PC-3 (cell line): ENCODE measurements at regions of chr20 and their contacts with region 1.

Region 1: GRCh38 chr20:31723319-31724078 is 831 bp upstream of the BCL2L1 start:
- DNase-seq: peak; percentile 97
- ATAC-seq: peak; percentile 64
- H3K4me3 ChIP-seq: peak overlapping the region; percentile 95
- H3K27ac ChIP-seq: peak overlapping the region; percentile 93
- H3K4me1 ChIP-seq: peaks cover 25% of the 10 kb centered on the region
- H3K27me3 ChIP-seq: no peaks in the 10 kb centered on the region
- CTCF ChIP-seq: peak; percentile 93

Region 2: DNA sequence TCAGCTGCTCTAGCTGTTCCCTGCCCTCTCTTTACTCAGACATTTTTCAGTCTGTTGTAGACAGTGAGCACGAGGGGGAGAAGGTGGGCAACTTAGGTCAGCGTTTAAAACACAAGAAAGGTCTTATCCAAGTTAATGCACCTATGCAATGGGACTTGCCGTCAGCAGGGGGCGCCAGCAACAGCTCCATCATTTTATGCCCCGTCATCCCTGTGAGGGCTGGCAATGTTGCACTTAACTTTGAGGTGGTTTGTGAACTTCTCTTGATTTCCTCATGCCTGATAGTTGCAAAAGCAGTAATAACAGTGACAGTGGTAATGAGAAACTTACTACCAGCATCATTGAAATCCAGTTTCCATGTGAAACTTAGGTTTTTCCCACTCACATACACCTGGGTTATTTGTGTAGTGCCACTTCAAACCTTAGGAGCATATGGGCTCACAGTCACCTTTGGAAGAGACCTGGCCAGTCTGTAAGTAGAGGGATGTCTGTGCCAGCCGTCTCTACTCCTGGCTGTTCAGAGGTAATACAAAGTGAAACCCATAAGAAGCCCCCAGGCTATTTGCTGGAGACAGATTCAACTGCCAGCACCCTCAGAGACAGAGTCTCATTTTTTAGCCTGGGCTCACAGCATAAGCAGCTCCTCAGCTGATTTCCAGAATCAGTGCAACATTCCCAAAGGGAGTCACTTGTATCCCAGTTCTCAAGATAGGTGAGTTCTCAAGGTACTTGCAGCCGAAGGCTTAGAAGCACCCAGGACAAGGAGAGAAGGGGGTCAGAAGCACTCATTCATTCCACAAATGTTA is 163.2 kb before region 1 on chr20:
- CTCF ChIA-PET with region 1: interaction called, 4 read pairs
- POLR2A ChIA-PET with region 1: interaction called, 5 read pairs
- intact Hi-C with region 1: loop called (anchors 5 kb)
- DNase-seq: peak; percentile 69
- ATAC-seq: peak; percentile 39
- H3K4me3 ChIP-seq: peak overlapping the region; percentile 24
- H3K27ac ChIP-seq: peak overlapping the region; percentile 95
- H3K4me1 ChIP-seq: peaks cover 40% of the 10 kb centered on the region
- H3K27me3 ChIP-seq: no peaks in the 10 kb centered on the region
- CTCF ChIP-seq: peak; percentile 97

Region 3: DNA sequence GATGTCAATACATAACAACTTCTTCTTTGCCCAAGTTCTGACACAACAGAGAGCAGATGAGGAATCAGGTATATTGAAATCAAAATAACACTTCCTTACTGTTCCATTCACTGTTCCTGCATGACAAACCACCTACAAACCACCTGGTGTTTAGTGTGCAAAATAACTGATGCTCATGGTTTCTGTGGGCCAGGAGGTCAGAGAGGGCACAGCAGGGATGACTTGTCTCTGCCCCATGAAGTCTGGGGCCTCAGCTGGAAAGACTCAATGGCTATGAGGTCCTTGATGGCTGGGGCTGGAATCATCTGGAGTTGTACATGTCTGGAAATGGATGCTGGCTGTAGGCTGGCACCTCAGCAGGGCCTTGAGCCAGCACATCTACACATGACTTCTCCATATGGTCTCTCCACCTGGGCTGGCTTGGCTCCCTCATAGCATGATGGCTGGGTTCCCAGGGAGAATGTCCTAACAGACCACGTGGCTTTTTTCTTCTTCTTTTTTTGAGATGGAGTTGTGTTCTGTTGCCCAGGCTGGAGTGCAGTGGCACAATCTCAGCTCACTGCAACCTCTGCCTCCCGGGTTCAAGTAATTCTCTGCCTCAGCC is 93.2 kb before region 1 on chr20:
- CTCF ChIA-PET with region 1: interaction called, 40 read pairs
- POLR2A ChIA-PET with region 1: interaction called, 3 read pairs
- intact Hi-C with region 1: loop called (anchors 1 kb)
- DNase-seq: no peak
- ATAC-seq: no peak
- H3K4me3 ChIP-seq: no peak overlapping the region
- H3K27ac ChIP-seq: no peak overlapping the region
- H3K4me1 ChIP-seq: no peaks in the 10 kb centered on the region
- H3K27me3 ChIP-seq: no peaks in the 10 kb centered on the region
- CTCF ChIP-seq: no peak

Region 4: DNA sequence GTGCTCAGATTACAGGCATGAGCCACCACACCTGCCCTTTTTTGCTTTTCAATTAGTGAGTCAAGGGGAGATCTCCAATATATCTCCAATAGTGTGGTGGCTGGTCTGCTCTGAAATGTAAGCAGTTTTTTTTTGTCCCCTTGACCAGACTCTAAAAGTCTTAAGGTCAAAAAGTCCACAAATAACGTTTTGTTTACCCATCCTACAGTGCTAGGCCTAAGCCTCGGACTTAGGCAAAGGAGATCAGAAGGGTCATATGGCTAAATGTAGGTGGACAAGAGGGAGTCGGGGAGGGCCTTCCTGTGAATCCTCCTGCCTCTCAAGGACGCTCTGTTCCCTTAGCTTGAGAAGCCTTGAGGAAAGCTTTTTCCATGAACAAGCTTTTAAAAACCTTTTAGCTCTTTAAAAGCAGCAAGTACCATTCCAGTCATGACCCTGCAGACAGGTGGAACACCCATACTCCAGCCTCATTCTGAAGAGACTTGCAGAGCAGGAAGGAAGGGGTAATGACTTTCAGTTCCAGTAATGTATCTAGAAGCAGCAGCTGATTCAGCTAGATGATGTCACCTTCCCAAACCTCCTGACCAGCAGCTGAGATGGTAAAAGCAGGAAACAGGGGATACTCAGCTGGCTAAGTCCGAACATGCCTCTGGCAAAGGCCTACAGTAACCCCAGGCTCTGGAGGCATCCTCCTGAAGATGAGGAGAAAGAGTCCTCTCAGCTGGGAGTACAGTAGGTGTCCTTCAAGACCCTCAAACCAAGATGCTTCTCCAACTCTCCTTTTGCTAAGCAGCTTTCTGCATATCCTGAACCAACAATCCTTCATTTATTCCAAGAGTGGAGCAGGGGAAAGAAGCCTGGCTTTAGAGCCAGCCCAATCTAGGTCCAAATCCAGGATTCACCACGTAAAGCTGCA is 24.4 kb before region 1 on chr20:
- CTCF ChIA-PET with region 1: interaction called, 16 read pairs
- POLR2A ChIA-PET with region 1: interaction called, 33 read pairs
- intact Hi-C with region 1: loop called (anchors 1 kb)
- DNase-seq: peak; percentile 88
- ATAC-seq: peak; percentile 47
- H3K4me3 ChIP-seq: no peak overlapping the region
- H3K27ac ChIP-seq: peak overlapping the region; percentile 62
- H3K4me1 ChIP-seq: peaks cover 75% of the 10 kb centered on the region
- H3K27me3 ChIP-seq: no peaks in the 10 kb centered on the region
- CTCF ChIP-seq: no peak

Region 5: GRCh38 chr20:31712564-31713311 is 10.8 kb before region 1 on chr20:
- CTCF ChIA-PET with region 1: interaction called, 16 read pairs
- POLR2A ChIA-PET with region 1: interaction called, 20 read pairs
- intact Hi-C with region 1: loop called (anchors 1 kb)
- DNase-seq: peak; percentile 97
- ATAC-seq: peak; percentile 44
- H3K4me3 ChIP-seq: peak overlapping the region; percentile 59
- H3K27ac ChIP-seq: peak overlapping the region; percentile 99
- H3K4me1 ChIP-seq: peaks cover 92% of the 10 kb centered on the region
- H3K27me3 ChIP-seq: no peaks in the 10 kb centered on the region
- CTCF ChIP-seq: no peak

Region 6: DNA sequence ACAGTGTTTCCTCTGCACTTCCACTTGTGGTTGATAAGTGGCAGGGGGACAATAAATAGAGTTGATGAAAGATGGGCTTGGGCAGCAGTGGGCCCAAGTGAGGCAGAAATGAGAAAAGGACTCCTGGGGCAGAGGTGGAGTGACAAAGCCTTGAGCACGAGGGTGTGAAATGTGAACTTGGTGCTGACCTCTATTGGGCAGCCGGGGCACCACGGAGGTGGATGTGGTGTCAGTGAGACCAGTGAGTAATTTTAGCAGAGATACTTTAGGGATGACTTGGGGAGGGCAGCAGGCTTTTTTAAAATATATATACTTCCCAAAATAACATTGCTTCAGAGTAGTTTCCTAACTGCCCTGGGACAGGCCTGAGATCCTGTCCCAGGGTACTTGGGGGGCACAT is 65.1 kb after region 1 on chr20:
- CTCF ChIA-PET with region 1: no interaction called
- POLR2A ChIA-PET with region 1: no interaction called
- intact Hi-C with region 1: loop called (anchors 5 kb)
- DNase-seq: no peak
- ATAC-seq: peak; percentile 66
- H3K4me3 ChIP-seq: no peak overlapping the region
- H3K27ac ChIP-seq: no peak overlapping the region
- H3K4me1 ChIP-seq: no peaks in the 10 kb centered on the region
- H3K27me3 ChIP-seq: no peaks in the 10 kb centered on the region
- CTCF ChIP-seq: peak; percentile 38; the same call in 1 of the 2 replicates